Cardiac septum (tissue), 1 donor: ENCODE measurements at regions of chr10 and their contacts with region 1.

Region 1: DNA sequence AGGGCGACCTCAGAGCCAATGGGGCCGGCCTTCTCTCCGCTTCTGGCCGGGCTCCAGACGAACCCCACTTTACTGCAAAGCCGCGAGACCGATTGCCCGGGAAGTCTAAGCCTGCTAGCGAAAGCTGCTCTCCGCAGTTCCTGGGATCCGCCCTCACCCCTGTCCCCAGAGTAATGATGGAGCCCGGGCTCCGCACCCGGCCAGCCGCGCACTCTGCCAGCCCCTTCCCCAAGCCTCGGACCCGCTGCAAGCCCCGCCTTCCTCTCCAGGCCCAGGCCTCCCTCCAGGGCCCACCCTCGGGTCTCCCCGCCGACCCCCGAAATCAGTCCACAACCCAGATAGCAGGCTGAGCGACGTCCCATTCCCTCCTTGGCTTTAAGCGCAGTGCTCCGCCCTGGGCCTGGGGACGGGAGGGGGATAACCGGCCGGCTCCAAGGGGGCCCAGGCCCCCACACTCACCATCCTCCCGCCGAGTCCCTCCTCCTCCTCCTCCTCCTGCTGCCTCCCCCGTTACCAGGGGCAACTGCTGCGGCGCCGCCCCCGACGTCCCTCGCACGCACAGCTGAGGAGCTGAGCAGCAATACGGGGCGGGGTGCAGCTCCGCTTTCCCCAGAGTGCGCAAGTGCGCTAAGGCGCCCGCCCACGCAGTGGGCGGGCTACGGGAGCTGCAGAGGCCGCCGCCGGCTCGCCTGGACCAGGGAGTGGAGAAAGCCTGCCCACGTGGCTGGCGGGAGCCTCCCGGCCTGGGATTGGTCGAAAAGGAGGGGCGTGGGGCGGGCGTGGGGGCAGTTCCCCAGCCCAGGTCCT is at the start of gene ARL3:
- DNase-seq: peak; percentile 99
- total RNA-seq, gene ARL3: 13.1 TPM

Region 2: GRCh38 chr10:102449321-102450193 is 264.5 kb before region 1 on chr10:
- intact Hi-C with region 1: no loop called
- DNase-seq: no peak

Region 3: GRCh38 chr10:102678842-102679289 is 35.2 kb before region 1 on chr10:
- intact Hi-C with region 1: loop called (anchors 5 kb)
- DNase-seq: peak; percentile 89